Activated T-helper 1 cell treated with anti-CD3 and anti-CD28 coated beads, Interleukin-12 subunit alpha, Interleukin-12 subunit beta, Interleukin-2, Interleukin-4 antibody, amounts not matched to agents 30 ng/mL and 10 ng/mL and 1 ng/mL, durations not matched to agents 14 hours and 24 hours and 36 hours (primary cell): ENCODE measurements at regions of chr17 and their contacts with region 1.

Region 1: GRCh38 chr17:68457539-68458259 is 403 bp upstream of the WIPI1 start:
- DNase-seq: peak; percentile 99
- H3K4me3 Mint-ChIP-seq: peak overlapping the region; percentile 78
- H3K27ac Mint-ChIP-seq: peak overlapping the region; percentile 85
- H3K4me1 Mint-ChIP-seq: peaks cover 70% of the 10 kb centered on the region
- H3K27me3 Mint-ChIP-seq: no peaks in the 10 kb centered on the region

Region 2: GRCh38 chr17:67717624-67718329 is 739.9 kb before region 1 on chr17 and contains the start of gene NOL11:
- intact Hi-C with region 1: loop called (anchors 5 kb)
- DNase-seq: peak; percentile 99
- H3K4me3 Mint-ChIP-seq: peak within 1 kb of the TSS; percentile 99
- H3K27ac Mint-ChIP-seq: peak within 1 kb of the TSS; percentile 99
- H3K4me1 Mint-ChIP-seq: peaks cover 16% of the 10 kb centered on the region
- H3K27me3 Mint-ChIP-seq: peaks cover 4% of the 10 kb centered on the region
- total RNA-seq, gene NOL11: 107 and 118 TPM in 2 replicates

Region 3: DNA sequence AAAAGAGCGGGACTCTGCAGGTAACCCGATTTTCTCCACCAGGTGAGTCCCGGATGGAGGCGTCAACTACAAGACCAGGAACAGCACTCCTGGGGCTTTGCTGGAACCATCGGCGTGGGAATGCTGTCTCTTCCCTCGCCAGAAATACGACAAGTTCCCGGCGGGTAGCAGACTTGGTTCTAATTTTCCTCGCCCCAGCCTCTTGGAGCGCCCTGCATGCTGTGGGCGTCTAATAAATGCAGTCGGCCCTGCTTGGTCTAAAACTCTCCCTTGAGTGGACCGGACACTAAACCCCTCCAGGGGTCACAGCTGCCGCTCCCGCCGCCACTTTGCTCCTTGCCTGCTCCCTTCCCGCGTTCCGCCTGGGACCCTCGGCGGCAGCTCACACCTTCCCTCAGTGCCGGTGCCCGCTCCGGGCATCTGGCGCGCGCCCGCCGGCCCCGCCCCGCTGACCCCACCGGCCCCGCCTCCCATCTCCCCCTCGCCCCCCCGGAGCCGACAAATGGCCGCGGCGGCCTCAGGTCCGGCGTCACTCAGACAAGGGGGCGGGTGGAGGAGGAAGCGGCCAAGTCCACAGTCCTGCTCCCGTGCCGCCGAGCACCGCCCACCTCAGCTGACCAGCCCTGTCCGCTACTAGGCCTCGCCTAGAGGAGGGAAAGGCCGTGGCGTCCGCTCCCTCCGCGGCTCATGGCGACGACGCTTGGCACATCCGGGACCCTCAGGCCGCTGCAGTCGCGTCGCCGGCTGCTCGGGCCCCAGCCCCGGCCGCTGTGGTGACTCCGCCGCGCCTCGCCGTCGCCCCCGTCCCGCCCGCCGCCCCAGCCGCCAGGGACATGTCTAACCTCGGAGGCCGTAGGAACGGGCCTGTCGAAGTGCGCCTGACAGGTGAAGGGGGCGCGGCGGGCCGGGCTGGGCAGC is 356.4 kb before region 1 on chr17:
- intact Hi-C with region 1: loop called (anchors 1 kb)
- DNase-seq: peak; percentile 44
- H3K4me3 Mint-ChIP-seq: peak overlapping the region; percentile 88
- H3K27ac Mint-ChIP-seq: peak overlapping the region; percentile 72
- H3K4me1 Mint-ChIP-seq: peaks cover 22% of the 10 kb centered on the region
- H3K27me3 Mint-ChIP-seq: peaks cover 19% of the 10 kb centered on the region

Region 4: GRCh38 chr17:68195667-68196393 is 261.9 kb before region 1 on chr17:
- intact Hi-C with region 1: no loop called
- DNase-seq: no peak
- H3K4me3 Mint-ChIP-seq: peak overlapping the region; percentile 65
- H3K27ac Mint-ChIP-seq: no peak overlapping the region
- H3K4me1 Mint-ChIP-seq: peaks cover 14% of the 10 kb centered on the region
- H3K27me3 Mint-ChIP-seq: peaks cover 62% of the 10 kb centered on the region

Region 5: GRCh38 chr17:68247445-68248198 is 210.1 kb before region 1 on chr17 and contains the start of gene AMZ2:
- intact Hi-C with region 1: loop called (anchors 1 kb)
- DNase-seq: peak; percentile 98
- H3K4me3 Mint-ChIP-seq: peak within 1 kb of the TSS; percentile 88
- H3K27ac Mint-ChIP-seq: peak within 1 kb of the TSS; percentile 96
- H3K4me1 Mint-ChIP-seq: peaks cover 49% of the 10 kb centered on the region
- H3K27me3 Mint-ChIP-seq: no peaks in the 10 kb centered on the region
- total RNA-seq, gene AMZ2: 67.3 and 75.7 TPM in 2 replicates

Region 6: GRCh38 chr17:68346448-68346847 is 111.3 kb before region 1 on chr17:
- intact Hi-C with region 1: loop called (anchors 5 kb)
- DNase-seq: peak; percentile 64
- H3K4me3 Mint-ChIP-seq: peak overlapping the region; percentile 67
- H3K27ac Mint-ChIP-seq: peak overlapping the region; percentile 92
- H3K4me1 Mint-ChIP-seq: peaks cover 72% of the 10 kb centered on the region
- H3K27me3 Mint-ChIP-seq: no peaks in the 10 kb centered on the region

Region 7: GRCh38 chr17:68377862-68378770 is 79.6 kb before region 1 on chr17:
- intact Hi-C with region 1: no loop called
- DNase-seq: no peak
- H3K4me3 Mint-ChIP-seq: no peak overlapping the region
- H3K27ac Mint-ChIP-seq: no peak overlapping the region
- H3K4me1 Mint-ChIP-seq: peaks cover 11% of the 10 kb centered on the region
- H3K27me3 Mint-ChIP-seq: peaks cover 15% of the 10 kb centered on the region

Region 8: DNA sequence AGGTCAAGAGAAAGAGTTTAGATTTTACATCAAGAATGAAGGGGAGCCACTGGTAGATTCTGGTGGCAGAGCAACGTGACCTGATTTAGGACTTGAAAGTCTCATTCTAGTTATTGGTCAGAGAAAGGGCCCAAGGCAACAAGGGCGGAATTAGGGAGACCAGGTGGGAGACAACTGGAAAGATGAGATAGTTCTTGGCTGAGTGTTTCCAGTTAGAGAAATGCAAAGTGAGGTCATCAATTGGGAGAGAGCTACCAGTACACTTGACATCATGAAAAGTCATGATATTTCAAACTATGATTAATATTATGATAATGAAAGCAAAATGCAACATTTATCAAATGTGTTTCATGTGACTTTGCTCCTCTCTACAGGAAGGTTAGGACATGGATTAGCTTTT is 290.7 kb after region 1 on chr17:
- intact Hi-C with region 1: no loop called
- DNase-seq: no peak
- H3K4me3 Mint-ChIP-seq: no peak overlapping the region
- H3K27ac Mint-ChIP-seq: no peak overlapping the region
- H3K4me1 Mint-ChIP-seq: no peaks in the 10 kb centered on the region
- H3K27me3 Mint-ChIP-seq: peaks cover 16% of the 10 kb centered on the region

Region 9: DNA sequence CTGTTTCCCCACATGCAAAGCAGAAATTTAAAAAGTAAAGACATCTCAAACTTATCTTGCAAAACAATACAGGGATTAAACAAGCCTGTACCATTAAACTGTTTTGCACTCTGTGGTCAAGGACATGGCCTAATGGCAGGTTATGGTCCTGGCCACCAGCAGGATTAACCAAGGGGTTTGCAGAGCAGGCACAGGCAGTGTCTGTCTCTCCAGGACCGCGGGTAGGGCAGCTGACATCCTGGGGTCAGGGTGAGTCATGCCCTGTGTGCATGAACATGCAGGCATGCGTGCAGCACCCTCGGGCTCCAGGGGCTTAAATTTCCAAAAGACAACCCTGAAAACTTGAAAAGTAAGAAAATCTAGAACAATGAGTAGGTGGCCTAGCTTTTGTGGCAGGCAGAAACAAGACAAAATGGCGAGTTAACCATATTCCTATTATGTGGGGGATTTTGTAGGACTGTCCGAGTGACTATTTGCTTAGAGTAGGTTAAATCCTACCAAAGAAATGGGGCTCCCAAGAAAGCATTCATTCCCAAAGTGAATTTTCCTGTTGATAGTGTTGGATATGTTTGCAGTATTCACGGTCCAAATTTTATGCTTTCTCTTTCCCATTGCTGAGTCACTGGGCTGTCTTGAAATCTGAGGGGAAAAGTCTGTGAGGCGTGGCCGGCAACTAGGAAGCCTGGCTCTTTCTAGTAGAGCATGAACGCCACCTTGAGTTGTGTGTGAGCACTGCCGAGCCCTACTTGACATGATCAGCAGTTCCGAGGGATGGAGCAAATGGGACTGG is 301.8 kb after region 1 on chr17:
- intact Hi-C with region 1: loop called (anchors 2 kb)
- DNase-seq: peak; percentile 35
- H3K4me3 Mint-ChIP-seq: peak overlapping the region; percentile 5
- H3K27ac Mint-ChIP-seq: no peak overlapping the region
- H3K4me1 Mint-ChIP-seq: peaks cover 21% of the 10 kb centered on the region
- H3K27me3 Mint-ChIP-seq: peaks cover 9% of the 10 kb centered on the region